Astrocyte of the cerebellum (primary cell): ENCODE measurements at regions of chr9 and their contacts with region 1.

Region 1: DNA sequence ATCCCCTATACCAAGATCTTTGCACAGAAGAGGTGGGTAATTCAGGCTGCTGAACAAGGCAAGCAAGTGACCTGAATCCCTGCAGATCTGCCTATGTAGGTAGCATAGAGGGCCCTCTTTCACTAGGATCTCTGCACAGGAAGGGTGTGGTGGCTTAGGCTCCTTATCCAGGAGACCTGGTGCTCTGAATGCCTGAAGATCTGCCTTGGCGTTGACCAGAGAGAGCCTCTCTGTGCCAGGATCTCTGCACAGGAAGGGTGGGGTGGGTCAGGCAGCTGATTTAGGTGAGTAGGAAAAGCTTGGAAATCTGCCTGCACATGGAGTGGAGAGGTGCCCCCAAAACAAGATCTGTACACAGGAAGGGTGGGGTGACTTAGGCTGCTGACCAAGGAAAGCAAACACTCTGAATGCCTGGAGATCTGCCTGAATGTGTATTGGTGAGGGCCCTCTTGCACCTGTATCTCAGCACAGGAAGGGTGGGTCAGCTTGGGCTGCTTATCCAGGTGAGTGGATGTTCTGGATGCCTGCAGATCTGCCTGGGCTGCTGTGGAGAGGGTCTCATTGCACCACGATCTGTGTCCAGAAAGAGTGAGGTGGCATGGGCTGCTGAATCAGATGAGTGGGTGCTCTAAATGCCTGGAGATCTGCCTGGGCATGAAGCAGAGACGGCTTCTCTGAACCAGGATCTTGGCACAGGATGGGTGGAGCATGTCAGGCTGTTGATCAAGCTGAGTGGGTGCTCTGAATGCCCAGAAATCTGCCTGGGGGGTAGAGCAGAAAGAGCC is 365.9 kb downstream of the DMAC1 start:
- DNase-seq: no peak
- H3K4me3 ChIP-seq: no peak overlapping the region
- CTCF ChIP-seq: no peak

Region 2: DNA sequence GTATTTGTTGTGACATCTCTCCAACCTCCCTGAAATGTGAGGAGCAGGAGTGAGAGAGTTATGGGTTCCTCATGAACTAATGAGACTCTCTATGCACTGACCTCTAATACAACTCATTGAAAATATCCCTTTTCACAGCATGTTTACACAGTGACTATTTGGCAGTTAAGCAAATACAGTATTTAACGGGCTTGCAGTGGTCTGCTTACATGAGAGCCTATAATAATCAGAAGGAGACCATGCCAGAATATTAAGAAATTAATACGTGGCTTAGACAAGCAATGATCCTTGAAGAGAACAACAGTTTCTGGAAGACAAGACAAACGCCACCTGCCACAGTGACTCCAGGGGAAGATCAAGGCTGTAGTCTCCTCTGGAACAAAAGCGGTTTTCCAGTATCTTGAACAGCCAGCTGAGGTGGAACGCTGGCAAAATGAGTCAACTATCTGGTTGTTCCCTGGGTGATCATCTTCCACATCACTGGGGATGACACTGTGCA is 58.6 kb before region 1 on chr9:
- in situ Hi-C with region 1: no loop called
- DNase-seq: no peak
- H3K4me3 ChIP-seq: no peak overlapping the region
- CTCF ChIP-seq: no peak

Region 3: DNA sequence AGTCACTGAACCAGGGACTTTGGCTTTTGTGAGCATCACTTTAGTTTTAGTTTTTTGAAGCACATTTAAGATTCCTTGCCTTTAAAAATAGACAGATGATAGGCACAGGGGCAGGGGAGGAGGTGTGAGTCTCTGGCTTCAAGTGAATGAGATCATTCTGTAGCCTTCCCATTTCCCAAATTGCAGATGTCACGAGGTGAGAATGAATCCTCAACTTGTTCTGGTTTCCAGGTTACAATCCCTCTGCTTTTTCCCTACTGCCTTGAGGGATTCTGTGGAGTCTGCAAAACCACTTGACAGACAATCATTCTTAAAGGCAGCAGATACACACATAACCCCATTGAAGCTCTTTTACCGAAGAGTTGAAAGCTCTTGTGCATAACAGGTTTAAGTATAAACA is 33.5 kb after region 1 on chr9:
- in situ Hi-C with region 1: loop called (anchors 5 kb)
- DNase-seq: no peak
- H3K4me3 ChIP-seq: no peak overlapping the region
- CTCF ChIP-seq: no peak

Region 4: GRCh38 chr9:7579351-7579750 is 145.7 kb after region 1 on chr9:
- in situ Hi-C with region 1: no loop called
- DNase-seq: no peak
- H3K4me3 ChIP-seq: no peak overlapping the region
- CTCF ChIP-seq: no peak